Activated CD4-positive, alpha-beta T cell treated with anti-CD3 and anti-CD28 coated beads for 36 hours (primary cell): ENCODE measurements at regions of chr21 and their contacts with region 1.

Region 1: DNA sequence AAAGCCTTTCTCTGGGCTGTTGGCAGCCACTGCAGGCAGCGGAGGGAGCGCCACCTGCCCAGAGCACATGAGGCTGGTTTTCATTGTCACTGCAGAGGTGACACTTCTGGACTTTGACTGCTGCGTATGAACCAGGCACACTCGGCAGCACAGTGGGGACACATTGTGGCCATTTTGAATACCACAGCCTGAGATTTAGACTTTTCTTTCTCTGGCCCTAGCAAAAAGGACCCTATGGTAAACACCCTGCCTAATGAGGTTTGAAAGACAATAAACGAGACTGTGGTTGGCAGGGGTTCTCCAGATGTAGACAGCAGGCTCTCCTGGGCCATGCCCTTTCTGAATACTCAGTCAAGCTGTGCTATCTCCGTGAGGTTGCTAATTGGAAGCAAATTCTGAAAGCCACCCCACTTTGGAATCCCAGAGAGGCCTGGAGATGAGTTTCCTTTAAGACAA is 12.0 kb upstream of the KCNE2 start:
- DNase-seq: peak; percentile 54
- ATAC-seq: peak; percentile 71
- H3K4me3 Mint-ChIP-seq: no peak overlapping the region
- H3K27ac Mint-ChIP-seq: no peak overlapping the region
- H3K4me1 Mint-ChIP-seq: peaks cover 4% of the 10 kb centered on the region
- H3K27me3 Mint-ChIP-seq: peaks cover 10% of the 10 kb centered on the region

Region 2: DNA sequence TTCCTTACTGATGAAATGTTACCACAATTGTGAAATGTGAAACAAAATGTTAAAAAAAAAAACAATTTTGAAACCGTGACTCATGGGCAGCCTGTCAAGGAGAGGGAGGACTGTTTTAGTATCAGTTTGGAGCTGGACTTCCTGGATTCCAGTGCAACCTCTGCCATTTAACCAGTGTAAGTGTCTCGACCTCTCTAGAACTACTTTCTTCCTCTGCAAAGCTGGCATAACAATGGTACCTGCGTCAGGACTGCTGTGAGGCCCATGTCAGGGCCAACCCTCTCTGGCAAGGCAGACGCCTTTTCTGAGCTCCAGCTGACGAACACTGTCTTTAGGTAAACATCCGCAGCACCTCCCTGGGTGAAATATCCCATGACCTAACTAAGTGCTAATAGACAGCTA is 1979.9 kb before region 1 on chr21:
- CTCF ChIA-PET with region 1: no interaction called
- POLR2A ChIA-PET with region 1: no interaction called
- intact Hi-C with region 1: no loop called
- DNase-seq: no peak
- ATAC-seq: peak; percentile 82
- H3K4me3 Mint-ChIP-seq: no peak overlapping the region
- H3K27ac Mint-ChIP-seq: peak overlapping the region; percentile 78
- H3K4me1 Mint-ChIP-seq: peaks cover 14% of the 10 kb centered on the region
- H3K27me3 Mint-ChIP-seq: no peaks in the 10 kb centered on the region

Region 3: DNA sequence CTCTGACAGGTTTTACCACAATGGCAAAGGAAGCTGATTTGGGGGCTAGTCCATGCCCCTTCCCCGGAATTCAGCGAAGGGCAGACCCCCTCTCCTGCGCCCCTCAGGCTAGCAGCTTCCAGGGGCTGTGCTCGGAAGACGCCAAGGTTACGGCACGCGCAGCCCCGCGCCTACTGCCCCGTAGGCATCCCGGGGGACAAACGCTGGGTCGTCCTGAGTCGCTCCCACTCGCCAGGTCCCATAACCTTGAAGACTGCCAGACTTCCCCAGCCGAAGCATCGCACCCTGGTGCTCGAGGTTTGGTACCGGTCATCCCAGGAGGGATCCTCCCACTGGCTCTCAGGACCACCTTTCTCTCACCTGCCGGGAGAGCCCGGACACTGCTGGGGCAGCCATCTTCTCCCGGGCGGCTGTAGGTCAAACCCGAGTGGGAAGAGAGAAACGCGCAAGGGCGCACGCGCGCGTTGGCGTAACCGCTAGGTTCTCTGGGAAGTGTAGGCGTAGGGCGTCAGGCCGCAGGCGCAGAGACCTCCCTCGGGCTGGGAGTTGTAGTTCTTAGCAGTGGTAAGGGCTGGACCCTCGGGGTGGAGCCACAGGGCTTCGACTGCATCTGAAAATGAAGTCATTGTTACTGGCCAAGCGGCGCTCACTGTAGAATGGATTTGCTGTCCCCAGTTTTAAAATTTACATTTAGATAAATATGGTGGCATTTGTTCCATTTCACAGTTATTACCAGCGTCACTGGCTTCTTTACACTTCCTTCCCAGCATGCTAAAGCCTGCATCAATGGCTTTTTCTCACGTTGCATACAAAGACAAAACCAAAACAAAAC is 436.2 kb before region 1 on chr21 and contains the start of gene ATP5PO:
- CTCF ChIA-PET with region 1: interaction called, 10 read pairs
- POLR2A ChIA-PET with region 1: no interaction called
- intact Hi-C with region 1: no loop called
- DNase-seq: peak; percentile 98
- ATAC-seq: peak; percentile 99
- H3K4me3 Mint-ChIP-seq: peak within 1 kb of the TSS; percentile 89
- H3K27ac Mint-ChIP-seq: peak within 1 kb of the TSS; percentile 97
- H3K4me1 Mint-ChIP-seq: peaks cover 27% of the 10 kb centered on the region
- H3K27me3 Mint-ChIP-seq: no peaks in the 10 kb centered on the region
- total RNA-seq, gene ATP5PO: 177 to 238 TPM

Region 4: GRCh38 chr21:34129039-34129891 is 222.5 kb before region 1 on chr21:
- CTCF ChIA-PET with region 1: interaction called, 7 read pairs
- POLR2A ChIA-PET with region 1: no interaction called
- intact Hi-C with region 1: loop called in 1 of 2 experiments (anchors 2 kb)
- DNase-seq: peak; percentile 87
- ATAC-seq: peak; percentile 94
- H3K4me3 Mint-ChIP-seq: peak overlapping the region; percentile 60
- H3K27ac Mint-ChIP-seq: peak overlapping the region; percentile 94
- H3K4me1 Mint-ChIP-seq: peaks cover 89% of the 10 kb centered on the region
- H3K27me3 Mint-ChIP-seq: no peaks in the 10 kb centered on the region

Region 5: DNA sequence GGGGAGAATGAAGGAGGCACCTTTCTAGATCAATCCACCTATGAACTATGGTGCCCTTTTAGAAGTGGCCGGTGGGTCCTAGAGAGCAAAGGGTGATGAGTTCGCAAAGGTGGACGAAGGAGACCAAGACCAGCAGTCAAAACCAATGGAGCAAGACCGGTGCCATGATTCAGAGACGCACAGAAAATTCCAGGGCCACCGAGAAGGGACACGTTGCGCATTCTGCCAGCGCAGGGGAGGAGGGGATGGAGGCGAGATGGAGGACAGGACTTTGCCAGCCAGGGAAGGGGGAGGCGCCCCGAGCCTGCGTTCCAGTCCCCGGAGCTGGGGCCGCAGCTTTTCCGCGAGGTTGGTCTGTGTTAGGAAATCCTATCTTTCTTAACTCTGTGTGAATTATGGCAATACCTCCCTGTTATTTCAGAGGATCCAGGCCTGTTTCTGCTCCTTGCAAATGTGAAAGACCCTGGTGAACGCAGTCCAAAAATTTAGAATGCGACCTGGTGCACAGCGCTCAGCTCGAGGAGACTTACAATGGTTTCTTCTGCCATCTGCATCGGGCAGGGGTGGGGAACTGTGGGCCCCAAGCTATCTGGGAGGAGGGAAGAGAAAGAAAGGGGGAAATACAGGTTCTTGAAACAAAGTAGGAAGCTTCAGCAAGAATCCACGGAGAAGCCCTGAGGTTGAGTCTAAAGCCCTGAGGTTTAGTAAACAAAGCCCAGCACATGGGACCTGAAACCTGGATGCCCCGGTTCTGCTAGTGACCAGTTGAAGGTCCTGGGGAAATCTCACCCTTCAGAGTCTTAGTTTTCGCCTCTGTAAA is 149.1 kb before region 1 on chr21:
- CTCF ChIA-PET with region 1: interaction called, 11 read pairs
- POLR2A ChIA-PET with region 1: no interaction called
- intact Hi-C with region 1: no loop called
- DNase-seq: no peak
- ATAC-seq: no peak
- H3K4me3 Mint-ChIP-seq: peak overlapping the region; percentile 70
- H3K27ac Mint-ChIP-seq: no peak overlapping the region
- H3K4me1 Mint-ChIP-seq: peaks cover 40% of the 10 kb centered on the region
- H3K27me3 Mint-ChIP-seq: peaks cover 3% of the 10 kb centered on the region

Region 6: GRCh38 chr21:34333150-34333739 is 18.6 kb before region 1 on chr21:
- CTCF ChIA-PET with region 1: interaction called, 12 read pairs
- POLR2A ChIA-PET with region 1: no interaction called
- intact Hi-C with region 1: no loop called
- DNase-seq: no peak
- ATAC-seq: no peak
- H3K4me3 Mint-ChIP-seq: no peak overlapping the region
- H3K27ac Mint-ChIP-seq: no peak overlapping the region
- H3K4me1 Mint-ChIP-seq: no peaks in the 10 kb centered on the region
- H3K27me3 Mint-ChIP-seq: no peaks in the 10 kb centered on the region

Region 7: DNA sequence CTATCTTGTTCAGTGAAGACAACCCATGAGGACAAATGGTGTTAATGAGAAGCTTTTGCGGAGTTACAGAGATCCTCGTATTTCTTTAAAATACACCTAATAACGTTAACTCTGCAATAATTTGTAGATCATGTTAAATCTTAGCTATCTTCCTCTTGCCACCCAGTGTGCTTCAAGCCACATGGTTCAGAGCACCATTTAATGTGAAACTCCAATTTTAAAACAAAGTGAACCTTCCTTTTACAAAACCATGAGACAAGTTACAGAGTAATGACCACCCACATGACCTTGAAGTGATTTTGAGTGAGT is 10.3 kb after region 1 on chr21:
- CTCF ChIA-PET with region 1: interaction called, 50 read pairs
- POLR2A ChIA-PET with region 1: no interaction called
- intact Hi-C with region 1: no loop called
- DNase-seq: no peak
- ATAC-seq: no peak
- H3K4me3 Mint-ChIP-seq: no peak overlapping the region
- H3K27ac Mint-ChIP-seq: no peak overlapping the region
- H3K4me1 Mint-ChIP-seq: peaks cover 6% of the 10 kb centered on the region
- H3K27me3 Mint-ChIP-seq: peaks cover 8% of the 10 kb centered on the region

Region 8: GRCh38 chr21:34367321-34367935 is 15.6 kb after region 1 on chr21:
- CTCF ChIA-PET with region 1: interaction called, 50 read pairs
- POLR2A ChIA-PET with region 1: no interaction called
- intact Hi-C with region 1: no loop called
- DNase-seq: peak; percentile 61
- ATAC-seq: peak; percentile 49
- H3K4me3 Mint-ChIP-seq: no peak overlapping the region
- H3K27ac Mint-ChIP-seq: no peak overlapping the region
- H3K4me1 Mint-ChIP-seq: no peaks in the 10 kb centered on the region
- H3K27me3 Mint-ChIP-seq: peaks cover 5% of the 10 kb centered on the region

Region 9: DNA sequence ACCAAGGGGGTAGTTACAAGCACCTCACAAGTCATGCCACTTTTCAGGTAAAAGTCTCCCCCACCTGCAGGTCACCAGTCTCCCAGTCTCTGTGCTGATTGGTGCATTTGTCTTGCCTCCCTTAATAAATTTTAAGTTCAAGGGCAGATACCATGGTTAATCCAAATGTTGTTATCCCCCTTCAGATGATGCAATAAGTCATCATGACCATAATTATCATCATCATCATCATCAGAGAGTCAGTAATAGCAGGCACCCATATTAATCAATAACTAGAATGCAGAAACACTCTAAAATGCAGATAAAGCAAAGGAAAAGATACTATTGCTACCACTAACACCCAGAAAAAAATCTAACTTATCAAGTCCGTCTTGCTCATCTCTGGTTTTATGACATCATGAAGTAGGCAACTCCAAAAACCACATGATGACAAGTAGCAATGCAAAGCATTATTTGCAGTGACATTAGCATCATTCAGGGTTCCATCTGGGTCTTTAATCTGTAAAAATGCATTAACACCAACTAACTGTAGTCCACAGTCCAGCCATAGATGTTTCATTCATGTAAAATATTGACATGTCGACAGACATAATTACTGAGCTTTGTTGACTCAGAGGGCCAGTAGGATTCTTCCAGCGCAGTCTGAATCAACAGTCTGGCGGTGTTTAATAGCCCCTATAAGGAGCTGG is 1189.3 kb after region 1 on chr21:
- CTCF ChIA-PET with region 1: no interaction called
- POLR2A ChIA-PET with region 1: no interaction called
- intact Hi-C with region 1: no loop called
- DNase-seq: no peak
- ATAC-seq: no peak
- H3K4me3 Mint-ChIP-seq: no peak overlapping the region
- H3K27ac Mint-ChIP-seq: no peak overlapping the region
- H3K4me1 Mint-ChIP-seq: peaks cover 2% of the 10 kb centered on the region
- H3K27me3 Mint-ChIP-seq: peaks cover 2% of the 10 kb centered on the region